ENCODE measurements at regions of chr5 and their contacts with region 1.

Region 1: DNA sequence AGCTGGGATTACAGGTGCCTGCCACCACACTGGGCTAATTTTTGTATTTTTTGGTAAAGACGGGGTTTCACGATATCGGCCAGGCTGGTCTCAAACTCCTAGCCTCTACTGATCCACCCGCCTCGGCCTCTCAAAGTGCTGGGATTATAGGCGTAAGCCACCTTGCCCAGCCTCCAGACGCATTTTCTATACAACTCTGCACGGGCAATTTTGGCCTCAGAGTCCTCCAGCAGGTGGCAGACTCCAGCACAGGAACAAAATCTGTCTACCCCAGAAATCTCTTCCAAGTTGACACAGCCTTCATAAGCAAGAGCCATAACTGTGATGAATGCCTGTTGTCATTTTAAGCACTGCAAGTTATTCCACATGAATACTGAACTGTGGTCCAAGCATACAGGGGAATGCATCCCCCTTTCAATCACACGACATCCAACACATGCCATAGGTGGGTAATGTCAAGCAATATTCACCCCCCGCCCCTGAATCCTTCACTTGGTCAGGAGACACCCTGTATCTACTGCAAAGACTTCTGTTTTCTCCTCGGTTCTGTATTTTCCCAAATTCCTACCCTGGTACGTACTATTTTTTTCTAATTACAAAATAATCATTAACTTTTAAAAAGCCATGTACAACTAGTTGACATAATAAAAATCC is 50.8 kb downstream of the ALDH7A1 start:
- DNase-seq: peak; percentile 50
- ATAC-seq: peak; percentile 57
- H3K4me3 Mint-ChIP-seq: no peak overlapping the region
- H3K27ac Mint-ChIP-seq: no peak overlapping the region
- H3K4me1 Mint-ChIP-seq: no peaks in the 10 kb centered on the region
- H3K27me3 Mint-ChIP-seq: no peaks in the 10 kb centered on the region

Region 2: GRCh38 chr5:126234563-126235195 is 309.5 kb before region 1 on chr5:
- CTCF ChIA-PET with region 1: no interaction called
- POLR2A ChIA-PET with region 1: no interaction called
- DNase-seq: no peak
- ATAC-seq: no peak
- H3K4me3 Mint-ChIP-seq: no peak overlapping the region
- H3K27ac Mint-ChIP-seq: no peak overlapping the region
- H3K4me1 Mint-ChIP-seq: no peaks in the 10 kb centered on the region
- H3K27me3 Mint-ChIP-seq: no peaks in the 10 kb centered on the region

Region 3: DNA sequence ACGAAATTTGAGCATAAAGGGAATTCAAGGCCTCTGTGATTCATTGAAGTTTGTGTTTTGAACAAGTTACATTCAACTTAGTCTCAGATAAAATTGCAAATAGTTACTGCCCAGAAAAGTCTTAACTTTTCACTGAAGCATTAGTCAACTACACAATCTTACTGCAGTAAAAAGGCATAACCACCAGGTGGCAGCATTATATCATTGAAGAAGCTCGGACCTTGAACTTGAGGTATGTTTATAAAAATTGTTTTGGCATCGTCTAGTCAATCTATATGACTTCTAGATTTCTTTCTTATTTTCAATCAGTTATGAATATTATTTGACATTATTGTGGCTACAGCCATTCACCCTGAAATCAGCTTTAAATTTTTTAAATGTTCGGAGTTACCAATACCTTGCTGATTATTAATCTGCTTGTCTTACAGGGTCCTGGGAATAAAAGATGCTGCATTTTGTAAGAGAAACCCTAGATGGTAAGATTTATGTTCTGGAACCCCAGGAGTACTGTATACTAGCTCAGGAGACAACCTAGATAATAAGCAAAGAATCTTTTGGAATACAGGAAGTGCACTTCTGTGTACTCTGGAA is 204.9 kb before region 1 on chr5:
- CTCF ChIA-PET with region 1: interaction called, 19 read pairs
- POLR2A ChIA-PET with region 1: no interaction called
- DNase-seq: peak; percentile 73
- ATAC-seq: no peak
- H3K4me3 Mint-ChIP-seq: no peak overlapping the region
- H3K27ac Mint-ChIP-seq: no peak overlapping the region
- H3K4me1 Mint-ChIP-seq: no peaks in the 10 kb centered on the region
- H3K27me3 Mint-ChIP-seq: peaks cover 12% of the 10 kb centered on the region

Region 4: DNA sequence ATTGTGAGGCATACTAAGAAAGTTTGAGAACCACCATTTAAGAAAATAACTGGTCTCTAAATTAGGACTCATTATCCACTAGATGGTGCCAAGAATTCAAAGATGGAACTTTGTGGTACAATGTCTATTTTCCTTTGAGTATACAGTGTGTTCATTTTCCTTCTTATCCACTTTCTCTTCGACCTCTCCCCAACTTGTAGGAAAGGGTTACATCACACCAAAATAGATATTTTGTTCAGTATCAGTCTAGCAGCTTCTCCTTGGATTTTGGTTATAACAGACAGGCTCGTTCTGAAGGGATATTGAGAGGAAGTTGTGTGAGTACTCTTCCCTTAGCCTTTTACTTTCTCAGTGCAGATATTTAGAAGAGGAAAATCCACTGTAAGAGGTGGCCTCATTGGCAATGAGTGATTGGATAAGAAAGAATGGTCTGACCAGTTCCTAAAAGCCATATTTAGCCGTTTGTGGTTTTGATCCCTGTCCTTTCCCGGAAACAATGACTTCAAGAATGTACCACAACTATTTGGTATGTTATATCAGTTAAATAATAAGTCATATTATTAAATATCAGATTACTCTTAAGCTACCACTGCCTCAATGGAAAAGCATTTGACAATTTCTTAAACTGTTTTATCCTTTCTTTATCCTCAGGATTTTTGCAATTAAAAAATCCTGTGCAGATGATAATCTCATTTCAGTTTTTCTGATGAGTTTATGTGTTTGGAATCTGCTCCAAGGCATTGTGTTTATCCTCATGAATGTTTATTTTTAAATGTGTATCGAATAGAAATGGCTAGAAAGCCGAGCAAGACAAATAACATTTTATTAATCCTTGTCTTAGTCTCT is 190.0 kb before region 1 on chr5:
- CTCF ChIA-PET with region 1: interaction called, 36 read pairs
- POLR2A ChIA-PET with region 1: no interaction called
- DNase-seq: no peak
- ATAC-seq: peak; percentile 67
- H3K4me3 Mint-ChIP-seq: peak overlapping the region; percentile 2
- H3K27ac Mint-ChIP-seq: no peak overlapping the region
- H3K4me1 Mint-ChIP-seq: peaks cover 18% of the 10 kb centered on the region
- H3K27me3 Mint-ChIP-seq: peaks cover 3% of the 10 kb centered on the region

Region 5: GRCh38 chr5:126531543-126532120 is 12.6 kb before region 1 on chr5:
- CTCF ChIA-PET with region 1: interaction called, 11 read pairs
- POLR2A ChIA-PET with region 1: no interaction called
- DNase-seq: no peak
- ATAC-seq: no peak
- H3K4me3 Mint-ChIP-seq: no peak overlapping the region
- H3K27ac Mint-ChIP-seq: no peak overlapping the region
- H3K4me1 Mint-ChIP-seq: no peaks in the 10 kb centered on the region
- H3K27me3 Mint-ChIP-seq: peaks cover under 1% of the 10 kb centered on the region

Region 6: GRCh38 chr5:126600631-126601511 is 56.7 kb after region 1 on chr5 and contains the start of gene PHAX:
- CTCF ChIA-PET with region 1: interaction called, 11 read pairs
- POLR2A ChIA-PET with region 1: no interaction called
- DNase-seq: peak; percentile 79
- ATAC-seq: peak; percentile 95
- H3K4me3 Mint-ChIP-seq: peak within 1 kb of the TSS; percentile 96
- H3K27ac Mint-ChIP-seq: peak within 1 kb of the TSS; percentile 97
- H3K4me1 Mint-ChIP-seq: peaks cover 33% of the 10 kb centered on the region
- H3K27me3 Mint-ChIP-seq: no peaks in the 10 kb centered on the region
- total RNA-seq, gene PHAX: 33.7 to 35.0 TPM